Mammary epithelial cell (primary cell): ENCODE measurements at regions of chr19 and their contacts with region 1.

Region 1: GRCh38 chr19:4471403-4472173 is 509 bp upstream of the HDGFL2 start:
- DNase-seq: peak; percentile 100
- H3K4me3 ChIP-seq: peak overlapping the region; percentile 52 to 66 (median 54)
- H3K27ac ChIP-seq: peak overlapping the region; percentile 14
- H3K4me1 ChIP-seq: peaks cover 14% of the 10 kb centered on the region
- H3K27me3 ChIP-seq: no peaks in the 10 kb centered on the region
- CTCF ChIP-seq: no peak

Region 2: GRCh38 chr19:4139614-4140236 is 331.9 kb before region 1 on chr19:
- CTCF ChIA-PET with region 1: interaction called, 12 read pairs
- dilution Hi-C with region 1: no loop called
- in situ Hi-C with region 1: no loop called
- intact Hi-C with region 1: no loop called
- DNase-seq: peak; percentile 54
- H3K4me3 ChIP-seq: no peak overlapping the region
- H3K27ac ChIP-seq: no peak overlapping the region
- H3K4me1 ChIP-seq: no peaks in the 10 kb centered on the region
- H3K27me3 ChIP-seq: no peaks in the 10 kb centered on the region
- CTCF ChIP-seq: peak; percentile 86 to 89

Region 3: GRCh38 chr19:4256563-4256962 is 215.0 kb before region 1 on chr19:
- CTCF ChIA-PET with region 1: no interaction called
- dilution Hi-C with region 1: no loop called
- in situ Hi-C with region 1: no loop called
- intact Hi-C with region 1: no loop called
- DNase-seq: no peak
- H3K4me3 ChIP-seq: no peak overlapping the region
- H3K27ac ChIP-seq: no peak overlapping the region
- H3K4me1 ChIP-seq: no peaks in the 10 kb centered on the region
- H3K27me3 ChIP-seq: no peaks in the 10 kb centered on the region
- CTCF ChIP-seq: peak in 1 of 2 donors; percentile 13

Region 4: DNA sequence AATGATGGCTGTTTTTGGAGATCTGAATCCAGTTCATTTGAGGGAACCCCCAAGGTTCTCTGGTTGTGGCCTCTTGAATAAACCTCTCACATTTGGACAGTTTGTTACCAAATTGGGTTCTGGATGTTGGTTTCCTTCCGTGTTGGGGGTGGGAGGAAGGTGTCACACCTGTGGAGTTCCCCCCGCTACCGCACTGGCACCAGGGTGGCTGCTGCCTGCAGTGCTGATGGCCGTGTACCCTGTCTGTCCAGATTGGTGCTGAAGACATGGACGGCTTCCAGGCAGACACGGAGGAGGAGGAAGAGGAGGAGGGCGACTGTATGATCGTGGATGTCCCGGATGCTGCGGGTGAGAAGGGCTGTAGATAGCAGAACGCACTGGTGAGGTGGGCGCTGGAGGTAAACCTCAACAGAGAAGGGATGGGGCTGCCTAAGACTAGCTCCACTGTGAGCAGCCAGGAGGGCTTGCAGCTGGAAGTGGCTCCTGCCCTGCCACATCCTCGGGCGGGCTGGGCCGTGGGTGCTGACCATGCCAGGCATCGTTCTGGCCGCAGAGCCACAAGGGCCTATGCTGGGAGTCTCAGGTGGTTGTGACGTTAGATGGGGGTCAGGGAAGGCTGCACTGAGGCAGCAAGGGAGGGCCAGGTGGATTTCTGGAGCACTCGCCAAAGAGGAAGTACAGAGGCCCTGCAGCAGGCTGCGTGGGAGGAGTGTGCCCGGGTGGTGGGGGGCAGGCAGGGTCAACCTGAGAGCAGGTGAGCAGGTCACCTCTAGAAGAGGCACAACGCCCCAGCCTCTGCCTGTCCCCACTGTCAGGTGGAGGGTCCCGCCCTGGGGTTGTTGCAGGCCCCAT is 29.4 kb before region 1 on chr19:
- CTCF ChIA-PET with region 1: no interaction called
- dilution Hi-C with region 1: no loop called
- in situ Hi-C with region 1: no loop called
- intact Hi-C with region 1: no loop called
- DNase-seq: no peak
- H3K4me3 ChIP-seq: no peak overlapping the region
- H3K27ac ChIP-seq: no peak overlapping the region
- H3K4me1 ChIP-seq: no peaks in the 10 kb centered on the region
- H3K27me3 ChIP-seq: no peaks in the 10 kb centered on the region
- CTCF ChIP-seq: no peak

Region 5: GRCh38 chr19:4457654-4458395 is 13.8 kb before region 1 on chr19 and contains the start of gene UBXN6:
- CTCF ChIA-PET with region 1: interaction called, 3 read pairs
- dilution Hi-C with region 1: no loop called
- in situ Hi-C with region 1: no loop called
- intact Hi-C with region 1: loop called (anchors 1 kb)
- DNase-seq: peak; percentile 96
- H3K4me3 ChIP-seq: peak within 1 kb of the TSS; percentile 72 to 88 (median 80)
- H3K27ac ChIP-seq: peak within 1 kb of the TSS; percentile 48
- H3K4me1 ChIP-seq: peaks cover 22% of the 10 kb centered on the region
- H3K27me3 ChIP-seq: no peaks in the 10 kb centered on the region
- CTCF ChIP-seq: no peak
- total RNA-seq, gene UBXN6: 81.0 to 87.7 TPM

Region 6: GRCh38 chr19:4557971-4558941 is 86.7 kb after region 1 on chr19:
- CTCF ChIA-PET with region 1: no interaction called
- dilution Hi-C with region 1: no loop called
- in situ Hi-C with region 1: no loop called
- intact Hi-C with region 1: no loop called
- DNase-seq: no peak
- H3K4me3 ChIP-seq: no peak overlapping the region
- H3K27ac ChIP-seq: no peak overlapping the region
- H3K4me1 ChIP-seq: no peaks in the 10 kb centered on the region
- H3K27me3 ChIP-seq: no peaks in the 10 kb centered on the region
- CTCF ChIP-seq: peak; percentile 89 to 97